CD8-positive, alpha-beta T cell (primary cell): ENCODE measurements at regions of chr1 and their contacts with region 1.

Region 1: GRCh38 chr1:15526490-15527339 is at the start of gene DNAJC16:
- DNase-seq: peak; percentile 90 to 99 (median 96)
- ATAC-seq: peak; percentile 18
- H3K4me3 ChIP-seq: peak within 1 kb of the TSS; percentile 63 to 86
- H3K4me3 Mint-ChIP-seq: peak within 1 kb of the TSS; percentile 95
- H3K27ac ChIP-seq: peak within 1 kb of the TSS; percentile 79 to 100
- H3K27ac Mint-ChIP-seq: peak within 1 kb of the TSS; percentile 100
- H3K4me1 ChIP-seq: peaks cover 34% of the 10 kb centered on the region
- H3K4me1 Mint-ChIP-seq: peaks cover 56% of the 10 kb centered on the region
- H3K27me3 ChIP-seq: no peaks in the 10 kb centered on the region
- H3K27me3 Mint-ChIP-seq: no peaks in the 10 kb centered on the region
- CTCF ChIP-seq: no peak
- total RNA-seq, gene DNAJC16: 7.9 to 8.5 TPM

Region 2: GRCh38 chr1:15409388-15410222 is 117.1 kb before region 1 on chr1 and contains the start of gene EFHD2:
- CTCF ChIA-PET with region 1: no interaction called
- POLR2A ChIA-PET with region 1: no interaction called
- intact Hi-C with region 1: loop called in 1 of 2 experiments (anchors 1 kb)
- DNase-seq: peak; percentile 73 to 99 (median 85)
- ATAC-seq: peak; percentile 76
- H3K4me3 ChIP-seq: peak within 1 kb of the TSS; percentile 79 to 95
- H3K4me3 Mint-ChIP-seq: peak within 1 kb of the TSS; percentile 92
- H3K27ac ChIP-seq: peak within 1 kb of the TSS; percentile 74 to 99
- H3K27ac Mint-ChIP-seq: peak within 1 kb of the TSS; percentile 97
- H3K4me1 ChIP-seq: peaks cover 48% of the 10 kb centered on the region
- H3K4me1 Mint-ChIP-seq: peaks cover 49% of the 10 kb centered on the region
- H3K27me3 ChIP-seq: no peaks in the 10 kb centered on the region
- H3K27me3 Mint-ChIP-seq: no peaks in the 10 kb centered on the region
- CTCF ChIP-seq: no peak
- total RNA-seq, gene EFHD2: 81.2 to 87.9 TPM

Region 3: DNA sequence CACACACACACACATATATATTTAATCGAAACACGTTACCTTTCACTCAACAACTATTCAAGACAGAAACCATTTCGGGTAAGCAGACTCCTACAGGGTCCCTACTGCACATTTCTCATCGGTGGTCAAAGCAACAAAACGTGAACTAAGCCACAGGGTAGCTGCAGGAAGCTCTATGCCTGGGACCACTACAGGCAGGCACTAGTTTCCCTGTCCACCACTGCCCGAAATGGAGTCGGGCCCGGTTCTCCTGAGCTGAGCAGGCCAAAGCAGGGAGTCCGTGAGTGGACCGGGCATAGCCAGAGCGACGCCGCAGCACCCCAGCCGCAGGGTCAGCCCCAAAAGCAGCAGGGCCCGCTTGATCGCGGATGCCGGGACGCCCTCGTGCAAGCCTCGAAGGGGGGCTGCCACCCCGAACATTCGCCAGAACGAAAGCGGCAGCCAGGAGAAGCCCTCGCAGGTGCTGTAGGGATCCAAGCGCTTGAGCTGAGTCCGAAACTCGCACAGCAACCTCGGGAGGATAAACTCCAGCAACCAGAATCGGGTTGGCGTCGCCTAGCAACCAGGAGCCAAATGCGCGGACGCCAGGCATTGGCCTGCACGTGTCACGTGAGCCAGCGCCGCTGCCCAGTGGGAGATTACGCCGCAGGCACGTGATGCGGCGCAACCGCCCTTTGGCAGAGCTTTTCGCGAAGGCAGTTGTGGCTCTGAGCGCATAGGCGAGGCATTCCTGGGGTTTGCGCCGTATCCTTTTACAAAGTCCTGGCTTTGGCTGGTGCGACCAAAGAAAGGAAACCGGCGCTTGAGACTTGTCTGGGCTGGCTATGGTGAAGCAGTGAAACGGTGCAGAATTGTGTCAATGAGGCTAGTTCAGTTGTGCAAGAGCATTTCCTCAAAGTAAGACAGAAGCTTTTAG is 76.6 kb after region 1 on chr1:
- CTCF ChIA-PET with region 1: no interaction called
- POLR2A ChIA-PET with region 1: no interaction called
- intact Hi-C with region 1: loop called in 1 of 2 experiments (anchors 1 kb)
- DNase-seq: peak; percentile 82 to 97 (median 92)
- ATAC-seq: peak; percentile 94
- H3K4me3 ChIP-seq: peak overlapping the region; percentile 77 to 79
- H3K4me3 Mint-ChIP-seq: peak overlapping the region; percentile 69
- H3K27ac ChIP-seq: peak overlapping the region; percentile 57 to 77
- H3K27ac Mint-ChIP-seq: peak overlapping the region; percentile 75
- H3K4me1 ChIP-seq: peaks cover 5% of the 10 kb centered on the region
- H3K4me1 Mint-ChIP-seq: peaks cover 12% of the 10 kb centered on the region
- H3K27me3 ChIP-seq: no peaks in the 10 kb centered on the region
- H3K27me3 Mint-ChIP-seq: no peaks in the 10 kb centered on the region
- CTCF ChIP-seq: no peak

Region 4: GRCh38 chr1:15835741-15836510 is 309.2 kb after region 1 on chr1:
- CTCF ChIA-PET with region 1: no interaction called
- POLR2A ChIA-PET with region 1: no interaction called
- intact Hi-C with region 1: loop called in 1 of 2 experiments (anchors 1 kb)
- DNase-seq: peak; percentile 96 to 100 (median 99)
- ATAC-seq: peak; percentile 62
- H3K4me3 ChIP-seq: peak overlapping the region; percentile 83 to 84
- H3K4me3 Mint-ChIP-seq: peak overlapping the region; percentile 96
- H3K27ac ChIP-seq: peak overlapping the region; percentile 83 to 99
- H3K27ac Mint-ChIP-seq: peak overlapping the region; percentile 99
- H3K4me1 ChIP-seq: peaks cover 20% of the 10 kb centered on the region
- H3K4me1 Mint-ChIP-seq: peaks cover 23% of the 10 kb centered on the region
- H3K27me3 ChIP-seq: no peaks in the 10 kb centered on the region
- H3K27me3 Mint-ChIP-seq: no peaks in the 10 kb centered on the region
- CTCF ChIP-seq: no peak

Region 5: DNA sequence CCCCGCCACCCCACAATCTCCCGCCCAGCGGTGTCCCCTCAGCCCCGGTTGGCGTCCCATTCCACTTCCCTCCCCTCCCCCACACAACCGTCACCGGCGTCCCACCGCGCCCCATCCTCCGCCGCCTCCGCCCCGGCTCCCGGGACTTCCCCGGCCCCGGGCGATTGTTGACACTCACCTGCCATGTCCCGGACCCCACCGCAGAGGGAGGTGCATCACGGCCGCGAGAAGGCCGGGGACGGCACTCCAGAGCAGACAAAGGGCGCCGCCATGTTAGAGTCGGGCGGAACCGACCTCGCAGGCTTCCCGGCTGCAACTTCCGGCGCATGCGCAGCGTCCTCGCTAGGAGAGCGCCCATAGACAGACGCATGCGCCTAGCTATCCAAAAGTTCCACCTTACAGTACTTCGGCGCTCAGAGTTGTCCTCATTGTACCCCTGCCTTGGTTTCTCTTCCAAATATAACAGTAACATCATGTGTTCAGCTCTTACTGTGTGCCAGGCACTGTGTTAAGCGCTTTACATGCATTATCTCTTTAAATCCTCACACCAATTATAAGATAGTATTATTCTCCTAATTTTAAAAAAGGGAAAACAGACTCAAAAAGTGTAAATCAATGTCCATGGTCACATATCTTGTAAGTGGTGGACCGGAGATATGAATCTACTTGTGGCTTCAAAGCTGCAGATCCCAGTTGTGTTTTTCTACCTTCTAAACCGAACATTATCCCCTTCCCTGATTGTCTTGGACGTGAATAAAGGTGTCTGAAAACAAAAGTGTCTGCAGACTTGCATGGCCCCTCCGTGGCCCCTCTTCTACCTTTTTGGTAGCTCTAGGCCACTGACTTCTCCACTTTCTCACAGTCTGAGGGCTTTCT is 449.3 kb after region 1 on chr1 and contains the start of gene ZBTB17:
- CTCF ChIA-PET with region 1: no interaction called
- POLR2A ChIA-PET with region 1: no interaction called
- intact Hi-C with region 1: loop called (anchors 1 to 10 kb)
- DNase-seq: peak; percentile 90 to 98 (median 95)
- ATAC-seq: peak; percentile 88
- H3K4me3 ChIP-seq: peak within 1 kb of the TSS; percentile 89 to 93
- H3K4me3 Mint-ChIP-seq: peak within 1 kb of the TSS; percentile 90
- H3K27ac ChIP-seq: peak within 1 kb of the TSS; percentile 68 to 87
- H3K27ac Mint-ChIP-seq: peak within 1 kb of the TSS; percentile 94
- H3K4me1 ChIP-seq: peaks cover 11% of the 10 kb centered on the region
- H3K4me1 Mint-ChIP-seq: peaks cover 38% of the 10 kb centered on the region
- H3K27me3 ChIP-seq: no peaks in the 10 kb centered on the region
- H3K27me3 Mint-ChIP-seq: no peaks in the 10 kb centered on the region
- CTCF ChIP-seq: no peak
- total RNA-seq, gene ZBTB17: 106 to 115 TPM

Region 6: DNA sequence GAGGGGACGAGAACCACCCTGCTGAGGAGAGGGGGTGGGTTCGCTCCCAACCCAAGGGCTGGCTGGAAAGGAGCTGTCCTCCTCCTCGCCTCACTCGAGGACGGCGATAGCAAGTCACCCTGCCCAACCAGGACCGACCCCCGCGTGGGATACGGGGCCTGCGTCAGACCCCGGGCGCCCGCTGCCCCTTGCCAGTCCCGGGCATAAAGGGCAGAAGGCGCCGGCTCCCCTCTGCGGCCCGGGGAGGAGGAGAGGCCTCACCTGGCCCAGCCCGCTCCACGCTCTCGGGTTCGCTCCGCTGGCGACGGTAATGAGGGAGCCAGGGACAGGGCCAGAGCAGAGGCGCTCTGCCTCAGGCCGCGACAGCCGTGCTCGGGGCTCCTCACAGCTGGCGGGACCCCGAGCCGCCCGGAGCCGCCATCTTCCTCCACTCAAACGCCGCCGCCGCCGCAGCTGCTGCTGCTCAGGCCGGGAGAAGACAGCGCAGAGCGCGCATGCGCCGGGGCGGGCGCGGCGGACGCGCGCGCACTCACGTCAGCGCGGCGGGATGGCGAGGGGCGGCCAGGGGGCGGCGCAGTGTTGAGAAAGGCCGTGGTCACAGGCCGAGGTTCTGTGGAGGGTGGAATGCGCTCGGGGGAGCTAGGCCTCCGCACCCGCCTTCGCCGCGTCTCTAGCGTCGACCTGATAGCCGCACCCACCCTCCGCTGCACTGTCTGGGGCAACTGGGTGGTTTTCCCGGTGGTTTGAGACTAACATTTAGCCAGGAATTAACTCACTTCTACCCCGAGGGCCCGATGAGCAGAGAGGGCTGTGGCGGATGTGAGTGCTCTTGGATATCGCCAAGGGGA is 825.5 kb after region 1 on chr1 and contains the start of gene FBXO42:
- CTCF ChIA-PET with region 1: no interaction called
- POLR2A ChIA-PET with region 1: no interaction called
- intact Hi-C with region 1: loop called in 1 of 2 experiments (anchors 5 kb)
- DNase-seq: peak; percentile 82 to 97 (median 91)
- ATAC-seq: peak; percentile 90
- H3K4me3 ChIP-seq: peak within 1 kb of the TSS; percentile 59 to 89
- H3K4me3 Mint-ChIP-seq: peak within 1 kb of the TSS; percentile 92
- H3K27ac ChIP-seq: peak within 1 kb of the TSS; percentile 74 to 96
- H3K27ac Mint-ChIP-seq: peak within 1 kb of the TSS; percentile 93
- H3K4me1 ChIP-seq: peaks cover 22% of the 10 kb centered on the region
- H3K4me1 Mint-ChIP-seq: peaks cover 33% of the 10 kb centered on the region
- H3K27me3 ChIP-seq: no peaks in the 10 kb centered on the region
- H3K27me3 Mint-ChIP-seq: no peaks in the 10 kb centered on the region
- CTCF ChIP-seq: peak; percentile 37
- total RNA-seq, gene FBXO42: 18.0 to 18.2 TPM

Region 7: GRCh38 chr1:16913833-16914662 is 1387.3 kb after region 1 on chr1:
- CTCF ChIA-PET with region 1: no interaction called
- POLR2A ChIA-PET with region 1: no interaction called
- intact Hi-C with region 1: loop called (anchors 10 kb)
- DNase-seq: peak; percentile 89 to 99 (median 97)
- ATAC-seq: peak; percentile 98
- H3K4me3 ChIP-seq: peak overlapping the region; percentile 62 to 76
- H3K4me3 Mint-ChIP-seq: peak overlapping the region; percentile 82
- H3K27ac ChIP-seq: peak overlapping the region; percentile 62 to 70
- H3K27ac Mint-ChIP-seq: peak overlapping the region; percentile 60
- H3K4me1 ChIP-seq: peaks cover 28% of the 10 kb centered on the region
- H3K4me1 Mint-ChIP-seq: peaks cover 28% of the 10 kb centered on the region
- H3K27me3 ChIP-seq: no peaks in the 10 kb centered on the region
- H3K27me3 Mint-ChIP-seq: no peaks in the 10 kb centered on the region
- CTCF ChIP-seq: no peak